Heart right ventricle (tissue), 16 donors: ENCODE measurements at regions of chr12 and their contacts with region 1.

Region 1: GRCh38 chr12:7188562-7189397 is 706 bp upstream of the PEX5 start:
- DNase-seq: peak; percentile 54 to 58
- ATAC-seq: peak; percentile 40 to 83 (median 74)
- H3K4me3 ChIP-seq: peak overlapping the region; percentile 30 to 87 (median 76)
- H3K27ac ChIP-seq: peak overlapping the region; percentile 71 to 96 (median 90)
- H3K4me1 ChIP-seq: peaks cover 6 to 27% (median 18%) of the 10 kb centered on the region in 9 donors
- H3K27me3 ChIP-seq: no peaks in the 10 kb centered on the region
- CTCF ChIP-seq: peak; percentile 17 to 75 (median 54)

Region 2: DNA sequence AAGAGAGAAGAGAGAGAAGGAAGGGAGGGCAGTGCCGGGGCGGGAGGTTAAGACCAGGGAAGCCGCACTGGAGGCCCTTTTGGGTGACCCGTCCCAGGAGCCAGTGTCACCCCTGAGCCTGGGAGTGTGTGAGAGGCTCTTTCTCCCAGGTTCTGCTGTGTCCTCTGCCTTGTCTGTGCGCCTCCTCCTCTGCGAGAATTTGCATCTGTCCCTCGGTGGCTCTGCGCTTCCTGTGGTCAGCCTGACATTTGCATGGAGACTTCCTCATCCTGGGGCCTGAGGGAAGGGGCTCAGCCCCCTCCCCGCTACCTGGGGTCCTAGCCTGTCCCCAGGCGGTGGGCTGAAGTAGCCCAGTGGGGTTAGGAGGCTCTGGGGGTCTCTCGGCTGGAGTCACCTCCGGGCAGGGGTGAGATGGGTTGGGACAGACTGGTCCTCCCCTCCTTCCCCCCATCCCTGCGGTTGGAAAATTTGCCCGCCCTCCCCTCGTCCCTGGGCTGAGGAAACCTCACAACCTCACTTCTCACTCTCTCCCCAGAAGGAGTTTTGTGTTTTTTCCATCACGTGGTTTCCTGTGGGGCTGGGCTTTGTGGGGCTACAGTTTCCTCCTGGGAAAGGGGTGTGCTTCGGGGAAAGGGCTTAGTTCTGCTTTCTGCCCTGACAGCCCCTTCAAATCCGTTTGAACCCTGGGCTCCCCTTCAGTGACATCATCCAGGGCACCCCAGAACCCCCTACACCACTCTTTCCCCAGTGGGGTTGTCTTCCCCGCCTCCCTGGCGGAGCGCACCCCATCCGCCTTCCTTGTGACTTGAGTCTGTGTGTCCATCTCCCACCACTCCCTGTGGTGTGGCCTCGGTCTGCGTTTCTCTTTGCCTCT is 235.1 kb before region 1 on chr12:
- intact Hi-C with region 1: no loop called
- DNase-seq: peak in 1 of 2 donors; percentile 79
- ATAC-seq: peak; percentile 22 to 78 (median 72)
- H3K4me3 ChIP-seq: peak overlapping the region in 6 of 10 donors; percentile 37 to 80 (median 42)
- H3K27ac ChIP-seq: peak overlapping the region in 9 of 10 donors; percentile 1 to 98 (median 75)
- H3K4me1 ChIP-seq: peaks cover 0 to 86% (median 23%) of the 10 kb centered on the region in 9 donors
- H3K27me3 ChIP-seq: no peaks in the 10 kb centered on the region
- CTCF ChIP-seq: no peak

Region 3: DNA sequence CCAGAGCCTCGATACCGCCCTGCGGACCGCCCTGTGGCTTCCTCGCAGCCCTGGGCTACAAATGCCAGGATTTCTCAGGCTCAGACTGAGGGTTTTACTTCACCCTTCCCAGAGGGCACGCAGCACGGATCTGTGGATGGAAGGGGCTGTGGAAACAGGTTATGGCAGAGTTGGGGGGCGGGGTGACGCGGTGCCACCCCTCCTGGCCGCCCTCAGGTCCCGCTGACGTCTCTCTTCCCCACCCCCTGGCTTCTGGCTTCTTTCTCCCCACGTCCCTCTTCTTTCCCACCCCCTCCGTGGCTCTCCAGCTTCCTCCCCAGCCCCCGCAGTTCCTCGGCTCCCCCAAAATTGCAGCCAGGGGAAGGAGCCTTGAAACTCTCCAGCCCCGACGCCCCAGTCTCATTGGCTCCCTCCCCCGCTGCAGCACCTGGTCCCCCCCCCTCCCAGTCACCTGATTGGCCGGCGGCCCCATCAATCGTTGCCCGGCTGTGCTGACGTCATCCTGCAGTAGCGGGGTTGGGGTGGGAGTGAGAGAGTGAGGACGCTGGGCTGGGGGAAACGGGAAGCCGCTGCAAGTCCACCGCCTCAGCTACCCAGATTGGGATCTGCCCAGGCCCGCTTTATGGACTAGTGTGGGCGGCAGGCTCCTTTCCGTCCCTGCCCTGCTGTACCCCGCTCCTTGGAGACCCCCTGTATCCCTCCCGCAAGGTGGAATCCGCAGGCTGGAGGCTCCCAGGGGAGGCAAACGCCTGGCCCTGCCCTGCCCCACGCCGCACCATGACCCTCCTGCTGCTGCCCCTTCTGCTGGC is 58.7 kb before region 1 on chr12 and contains the start of gene CLSTN3:
- intact Hi-C with region 1: no loop called
- DNase-seq: peak; percentile 84 to 86
- ATAC-seq: peak; percentile 63 to 93 (median 88)
- H3K4me3 ChIP-seq: peak within 1 kb of the TSS; percentile 52 to 77 (median 66)
- H3K27ac ChIP-seq: peak within 1 kb of the TSS in 8 of 10 donors; percentile 30 to 80 (median 64)
- H3K4me1 ChIP-seq: peaks cover 5 to 38% (median 25%) of the 10 kb centered on the region in 9 donors
- H3K27me3 ChIP-seq: peaks cover 0 to 29% (median 0%) of the 10 kb centered on the region in 7 donors
- CTCF ChIP-seq: no peak
- total RNA-seq, gene CLSTN3: 3.7 to 16.8 (median 6.0) TPM

Region 4: GRCh38 chr12:7142056-7142644 is 46.6 kb before region 1 on chr12:
- intact Hi-C with region 1: loop called in 1 of 10 experiments (anchors 5 kb)
- DNase-seq: no peak
- ATAC-seq: peak in 5 of 8 donors; percentile 27 to 58 (median 39)
- H3K4me3 ChIP-seq: no peak overlapping the region
- H3K27ac ChIP-seq: no peak overlapping the region
- H3K4me1 ChIP-seq: peaks cover 0 to 8% (median 0%) of the 10 kb centered on the region in 9 donors
- H3K27me3 ChIP-seq: no peaks in the 10 kb centered on the region
- CTCF ChIP-seq: peak; percentile 22 to 68 (median 57)